GM10248 (cell line): ENCODE measurements at regions of chr18 and their contacts with region 1.

Region 1: DNA sequence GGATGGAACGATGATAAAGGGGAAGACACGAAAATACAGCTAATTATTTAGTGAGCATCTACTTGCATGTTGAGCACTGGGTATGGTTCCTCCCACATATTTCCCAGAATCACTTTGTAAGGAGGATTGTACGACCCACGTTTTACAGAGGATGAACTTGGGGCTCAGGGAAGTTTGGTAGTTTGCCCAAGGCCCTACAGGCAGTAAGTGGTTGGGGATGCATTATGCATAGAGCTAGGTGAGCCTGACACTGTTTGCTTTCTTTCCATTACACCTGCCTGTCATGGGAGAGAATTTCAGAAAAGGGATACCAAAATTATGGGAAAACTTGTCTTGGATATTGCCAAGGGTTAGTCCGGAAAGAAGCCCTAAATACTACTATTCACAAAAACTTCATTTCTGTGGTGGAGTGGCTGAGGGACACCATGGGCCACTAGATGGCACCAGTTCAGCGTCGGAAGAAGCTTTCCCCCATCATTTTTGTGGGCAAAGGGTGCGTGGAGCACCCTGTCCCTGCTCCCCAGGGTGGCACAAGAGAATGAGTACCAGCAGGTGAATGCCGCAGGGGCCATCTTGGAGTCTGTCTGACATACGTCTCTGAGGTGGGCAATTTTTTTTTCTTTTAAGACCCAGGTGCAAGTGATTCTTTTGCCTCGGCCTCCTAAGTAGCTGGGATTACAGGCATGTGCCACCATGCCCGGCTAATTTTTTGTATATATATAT is 23.5 kb upstream of the C18orf32 start:
- DNase-seq: peak; percentile 59
- CTCF ChIP-seq: peak; percentile 80

Region 2: GRCh38 chr18:49359732-49360444 is 150.7 kb before region 1 on chr18:
- CTCF ChIA-PET with region 1: no interaction called
- POLR2A ChIA-PET with region 1: no interaction called
- DNase-seq: peak; percentile 18
- CTCF ChIP-seq: no peak

Region 3: DNA sequence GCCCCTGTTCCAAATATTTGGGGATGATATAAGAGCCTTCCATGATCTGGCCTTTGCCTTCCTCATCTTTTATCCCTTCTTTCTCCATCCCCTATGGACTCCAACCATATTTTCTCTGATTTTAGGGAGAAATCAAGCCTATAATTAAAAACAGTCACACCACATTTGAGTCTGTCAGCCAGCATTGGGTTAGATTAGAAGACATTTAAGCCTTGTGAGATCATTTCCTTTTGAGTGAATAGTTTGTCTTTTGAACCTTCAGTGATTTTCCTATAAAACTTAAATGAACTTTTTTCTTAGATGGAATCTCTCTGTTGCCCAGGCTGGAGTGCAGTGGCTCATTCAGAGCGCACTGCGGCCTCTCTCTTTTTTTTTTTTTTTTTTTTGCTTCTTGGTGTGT is 15.9 kb before region 1 on chr18:
- CTCF ChIA-PET with region 1: interaction called, 19 read pairs
- POLR2A ChIA-PET with region 1: interaction called, 3 read pairs
- DNase-seq: no peak
- CTCF ChIP-seq: no peak

Region 4: GRCh38 chr18:49768051-49768391 is 257.5 kb after region 1 on chr18:
- CTCF ChIA-PET with region 1: interaction called, 10 read pairs
- POLR2A ChIA-PET with region 1: no interaction called
- DNase-seq: no peak
- CTCF ChIP-seq: peak; percentile 8

Region 5: GRCh38 chr18:49858309-49859020 is 347.9 kb after region 1 on chr18:
- CTCF ChIA-PET with region 1: interaction called, 103 read pairs
- POLR2A ChIA-PET with region 1: no interaction called
- DNase-seq: peak; percentile 73
- CTCF ChIP-seq: peak; percentile 80